Endothelial cell of umbilical vein (primary cell): ENCODE measurements at regions of chr12 and their contacts with region 1.

Region 1: GRCh38 chr12:19739183-19739776 is 300.0 kb downstream of the AEBP2 start:
- DNase-seq: peak; percentile 92
- H3K4me3 ChIP-seq: no peak overlapping the region
- H3K27ac ChIP-seq: peak overlapping the region; percentile 24
- H3K4me1 ChIP-seq: peaks cover 31% of the 10 kb centered on the region
- H3K27me3 ChIP-seq: no peaks in the 10 kb centered on the region
- CTCF ChIP-seq: peak; percentile 25 to 40
- POLR2A ChIP-seq: no peak

Region 2: DNA sequence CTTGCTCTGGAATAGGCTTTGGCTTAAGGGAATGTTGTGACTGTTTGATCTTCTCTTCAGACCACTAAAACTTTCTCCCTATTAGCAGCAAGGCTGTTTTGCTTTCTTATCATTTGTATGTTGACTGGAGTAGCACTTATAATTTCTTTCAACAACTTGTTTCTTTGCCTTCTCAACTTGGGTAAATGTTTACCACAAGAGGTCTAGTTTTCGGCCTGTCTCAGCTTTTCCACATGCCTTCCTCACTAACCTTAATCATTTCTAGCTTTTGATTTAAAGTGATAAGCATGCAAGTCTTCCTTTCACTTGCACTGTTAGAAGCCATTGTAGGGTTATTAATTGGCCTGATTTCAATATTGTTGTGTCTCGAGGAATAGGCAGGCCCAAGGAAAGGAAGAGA is 426.6 kb before region 1 on chr12:
- CTCF ChIA-PET with region 1: no interaction called
- POLR2A ChIA-PET with region 1: no interaction called
- dilution Hi-C with region 1: no loop called
- intact Hi-C with region 1: no loop called
- DNase-seq: no peak
- H3K4me3 ChIP-seq: no peak overlapping the region
- H3K27ac ChIP-seq: no peak overlapping the region
- H3K4me1 ChIP-seq: no peaks in the 10 kb centered on the region
- H3K27me3 ChIP-seq: no peaks in the 10 kb centered on the region
- CTCF ChIP-seq: no peak
- POLR2A ChIP-seq: no peak

Region 3: GRCh38 chr12:19654650-19655376 is 84.5 kb before region 1 on chr12:
- CTCF ChIA-PET with region 1: interaction called, 3 read pairs
- POLR2A ChIA-PET with region 1: no interaction called
- dilution Hi-C with region 1: no loop called
- intact Hi-C with region 1: loop called (anchors 2 kb)
- DNase-seq: peak; percentile 29
- H3K4me3 ChIP-seq: no peak overlapping the region
- H3K27ac ChIP-seq: no peak overlapping the region
- H3K4me1 ChIP-seq: peaks cover 2% of the 10 kb centered on the region
- H3K27me3 ChIP-seq: no peaks in the 10 kb centered on the region
- CTCF ChIP-seq: no peak
- POLR2A ChIP-seq: no peak

Region 4: GRCh38 chr12:19757317-19757877 is 18.1 kb after region 1 on chr12:
- CTCF ChIA-PET with region 1: interaction called, 23 read pairs
- POLR2A ChIA-PET with region 1: no interaction called
- dilution Hi-C with region 1: no loop called
- intact Hi-C with region 1: no loop called
- DNase-seq: peak; percentile 64
- H3K4me3 ChIP-seq: no peak overlapping the region
- H3K27ac ChIP-seq: no peak overlapping the region
- H3K4me1 ChIP-seq: peaks cover 3% of the 10 kb centered on the region
- H3K27me3 ChIP-seq: no peaks in the 10 kb centered on the region
- CTCF ChIP-seq: peak; percentile 46 to 56
- POLR2A ChIP-seq: no peak

Region 5: GRCh38 chr12:20030826-20031225 is 291.5 kb after region 1 on chr12:
- CTCF ChIA-PET with region 1: no interaction called
- POLR2A ChIA-PET with region 1: no interaction called
- dilution Hi-C with region 1: no loop called
- intact Hi-C with region 1: loop called (anchors 2 kb)
- DNase-seq: peak; percentile 96
- H3K4me3 ChIP-seq: no peak overlapping the region
- H3K27ac ChIP-seq: peak overlapping the region; percentile 91
- H3K4me1 ChIP-seq: peaks cover 31% of the 10 kb centered on the region
- H3K27me3 ChIP-seq: no peaks in the 10 kb centered on the region
- CTCF ChIP-seq: no peak
- POLR2A ChIP-seq: peak; percentile 56

Region 6: GRCh38 chr12:20376984-20377383 is 637.7 kb after region 1 on chr12:
- CTCF ChIA-PET with region 1: interaction called, 7 read pairs
- POLR2A ChIA-PET with region 1: no interaction called
- dilution Hi-C with region 1: no loop called
- intact Hi-C with region 1: loop called (anchors 1 kb)
- DNase-seq: peak; percentile 60
- H3K4me3 ChIP-seq: no peak overlapping the region
- H3K27ac ChIP-seq: no peak overlapping the region
- H3K4me1 ChIP-seq: peaks cover 37% of the 10 kb centered on the region
- H3K27me3 ChIP-seq: no peaks in the 10 kb centered on the region
- CTCF ChIP-seq: peak; percentile 22 to 35
- POLR2A ChIP-seq: no peak

Region 7: DNA sequence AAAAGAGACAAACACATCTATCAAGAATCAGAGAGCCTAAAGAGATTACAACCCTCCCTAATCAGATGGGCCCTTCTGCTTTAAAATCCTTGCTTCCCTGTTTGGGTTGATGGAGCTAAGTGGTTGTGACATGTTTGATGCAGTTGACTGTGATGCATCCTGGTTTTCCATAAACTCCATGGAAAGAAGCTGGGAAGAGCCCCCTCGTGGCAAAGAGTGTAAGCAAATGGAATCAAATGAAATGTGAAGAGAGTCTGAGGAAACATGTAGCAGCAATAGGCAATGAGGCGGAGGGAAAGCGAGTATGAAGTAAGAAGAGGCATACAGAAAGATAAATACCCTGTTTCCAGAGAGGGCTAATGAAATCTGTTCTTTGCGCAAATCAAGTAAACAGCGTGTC is 885.4 kb after region 1 on chr12:
- CTCF ChIA-PET with region 1: interaction called, 20 read pairs
- POLR2A ChIA-PET with region 1: no interaction called
- dilution Hi-C with region 1: no loop called
- intact Hi-C with region 1: no loop called
- DNase-seq: peak; percentile 58
- H3K4me3 ChIP-seq: no peak overlapping the region
- H3K27ac ChIP-seq: no peak overlapping the region
- H3K4me1 ChIP-seq: peaks cover 11% of the 10 kb centered on the region
- H3K27me3 ChIP-seq: no peaks in the 10 kb centered on the region
- CTCF ChIP-seq: peak; percentile 32 to 46
- POLR2A ChIP-seq: no peak